A673 (cell line): ENCODE measurements at regions of chr13 and their contacts with region 1.

Region 1: GRCh38 chr13:28337166-28338005 is 157.5 kb downstream of the FLT1 start:
- DNase-seq: peak; percentile 69
- H3K4me3 ChIP-seq: no peak overlapping the region
- H3K27ac ChIP-seq: no peak overlapping the region
- H3K4me1 ChIP-seq: peaks cover 43% of the 10 kb centered on the region
- H3K27me3 ChIP-seq: no peaks in the 10 kb centered on the region
- CTCF ChIP-seq: no peak

Region 2: DNA sequence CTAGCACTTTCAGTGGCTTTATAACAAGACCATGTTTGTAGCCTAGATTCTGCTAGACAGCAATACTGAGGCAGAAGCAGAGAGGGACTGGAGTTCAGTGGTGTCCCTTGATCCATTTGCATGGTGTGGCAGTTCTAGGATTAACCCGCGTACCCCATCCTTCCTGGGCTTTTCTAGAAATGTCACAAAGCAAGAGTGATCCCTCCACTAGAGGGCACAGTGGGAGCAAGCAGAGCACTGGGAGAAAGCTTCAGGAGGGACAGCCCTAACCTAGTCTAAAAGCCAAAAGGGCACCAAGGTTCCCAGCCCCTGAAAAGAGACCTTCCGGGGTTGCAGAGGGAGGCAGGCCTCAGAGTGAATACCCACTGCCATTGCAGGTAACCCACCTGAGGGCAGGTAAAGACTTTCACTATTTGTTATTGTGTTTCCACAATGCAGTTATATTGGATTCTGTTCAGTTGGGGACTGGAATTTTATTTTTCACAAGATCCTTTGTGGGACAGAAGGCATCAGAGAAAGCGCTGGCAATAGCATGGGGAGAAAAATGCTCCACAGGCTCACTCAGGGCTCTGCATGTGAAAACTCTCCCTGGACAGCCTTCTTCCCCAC is 13.1 kb before region 1 on chr13:
- CTCF ChIA-PET with region 1: interaction called, 13 read pairs
- POLR2A ChIA-PET with region 1: no interaction called
- intact Hi-C with region 1: no loop called
- DNase-seq: peak; percentile 81
- H3K4me3 ChIP-seq: no peak overlapping the region
- H3K27ac ChIP-seq: no peak overlapping the region
- H3K4me1 ChIP-seq: peaks cover 12% of the 10 kb centered on the region
- H3K27me3 ChIP-seq: no peaks in the 10 kb centered on the region
- CTCF ChIP-seq: peak; percentile 90

Region 3: DNA sequence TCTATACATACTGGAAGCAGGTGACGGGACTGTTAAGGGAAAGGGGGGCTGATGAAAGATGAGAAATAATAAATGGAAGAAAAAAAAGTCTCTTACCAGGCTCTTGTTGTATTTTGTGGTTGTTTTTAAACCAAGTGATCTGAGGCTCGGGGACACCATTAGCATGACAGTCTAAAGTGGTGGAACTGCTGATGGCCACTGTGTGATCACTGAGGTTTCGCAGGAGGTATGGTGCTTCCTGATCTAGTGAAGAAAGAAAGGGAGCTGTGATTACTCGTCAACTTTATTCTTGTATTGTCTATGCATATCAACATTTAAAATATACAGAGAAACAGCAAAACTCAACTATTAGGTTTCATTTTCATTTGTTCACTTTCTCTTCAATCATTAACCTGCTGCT is 47.4 kb after region 1 on chr13:
- CTCF ChIA-PET with region 1: interaction called, 12 read pairs
- POLR2A ChIA-PET with region 1: interaction called, 3 read pairs
- intact Hi-C with region 1: no loop called
- DNase-seq: no peak
- H3K4me3 ChIP-seq: no peak overlapping the region
- H3K27ac ChIP-seq: no peak overlapping the region
- H3K4me1 ChIP-seq: peaks cover 48% of the 10 kb centered on the region
- H3K27me3 ChIP-seq: no peaks in the 10 kb centered on the region
- CTCF ChIP-seq: no peak